AG04449 (cell line): ENCODE measurements at regions of chr4 and their contacts with region 1.

Region 1: DNA sequence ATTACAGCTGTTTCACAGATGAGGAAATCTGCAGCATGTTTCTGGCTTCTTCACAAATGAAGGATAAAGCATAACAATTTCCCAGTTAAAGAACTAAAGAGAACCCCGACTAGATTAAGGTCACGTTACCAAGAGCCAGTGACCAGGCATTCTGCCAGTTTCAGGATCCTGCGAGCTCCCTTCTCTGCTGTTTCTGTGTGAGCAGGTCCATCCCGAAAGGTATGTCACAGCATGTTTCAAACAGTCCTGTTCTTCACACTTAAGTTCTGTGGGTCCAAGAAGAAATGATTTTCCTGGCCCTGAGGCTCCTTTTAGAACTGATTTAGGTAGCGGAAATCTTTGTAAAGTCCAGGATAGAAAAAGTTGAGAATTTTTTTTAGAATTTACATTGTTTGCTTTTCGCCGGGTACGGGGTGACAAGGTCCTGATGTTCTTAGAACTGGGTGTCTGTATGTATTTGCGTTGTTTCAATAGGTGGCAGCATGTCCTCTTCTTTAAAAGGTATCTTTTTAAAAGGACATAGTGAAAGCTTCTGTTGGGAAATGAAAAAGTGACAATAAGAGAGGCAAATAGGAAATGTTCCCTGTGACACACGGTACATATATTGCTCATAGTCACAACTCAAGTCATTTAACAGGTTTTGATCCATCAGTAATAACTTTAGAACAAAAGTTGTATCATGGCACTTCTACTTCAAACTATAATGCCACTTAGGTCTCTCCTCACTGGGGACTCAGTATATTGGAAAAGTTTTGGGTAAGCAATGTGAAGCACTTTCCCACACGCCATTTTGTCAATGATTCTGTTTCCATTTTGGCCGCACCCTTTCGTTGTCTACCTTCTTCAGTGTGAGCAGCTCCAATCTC is 18.4 kb downstream of the IL21 start:
- DNase-seq: no peak
- H3K4me3 ChIP-seq: no peak overlapping the region
- CTCF ChIP-seq: peak; percentile 20

Region 2: DNA sequence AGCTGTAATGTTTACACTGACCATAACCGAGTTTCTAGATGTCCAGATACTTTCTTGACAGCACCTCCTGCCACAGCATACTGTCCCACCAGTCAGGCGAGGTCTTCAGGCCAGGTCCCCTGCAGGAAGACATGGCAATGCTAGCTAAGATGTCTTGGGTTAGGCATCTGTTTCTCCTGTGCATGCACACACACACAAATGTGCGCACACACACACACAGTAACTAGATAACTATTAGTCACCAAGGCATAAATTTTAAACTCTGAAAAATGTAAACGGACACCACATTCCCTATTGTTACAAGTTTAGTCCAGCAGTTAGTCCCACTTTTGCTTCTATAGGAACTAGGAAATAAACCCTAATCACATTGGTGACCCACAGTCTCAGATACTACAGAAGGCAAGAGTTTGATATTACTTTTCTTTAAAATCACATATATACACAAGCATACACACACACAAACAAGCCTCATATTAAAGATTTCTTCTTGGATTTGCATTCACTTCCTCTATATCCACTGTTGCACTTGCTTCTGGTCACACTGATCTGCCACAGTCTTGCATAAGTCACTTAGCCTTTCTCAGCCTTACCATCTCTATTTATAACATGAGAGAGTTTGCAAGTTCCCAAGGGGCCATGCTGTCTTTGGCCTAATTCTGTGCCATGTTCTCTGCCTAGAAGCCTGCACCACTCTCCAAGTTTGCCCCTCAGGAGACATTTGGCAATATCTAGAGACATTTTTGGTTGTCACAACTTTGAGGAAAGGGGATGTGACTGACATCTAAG is 13.9 kb before region 1 on chr4:
- CTCF ChIA-PET with region 1: interaction called, 21 read pairs
- POLR2A ChIA-PET with region 1: no interaction called
- DNase-seq: peak; percentile 16
- H3K4me3 ChIP-seq: no peak overlapping the region
- CTCF ChIP-seq: no peak

Region 3: DNA sequence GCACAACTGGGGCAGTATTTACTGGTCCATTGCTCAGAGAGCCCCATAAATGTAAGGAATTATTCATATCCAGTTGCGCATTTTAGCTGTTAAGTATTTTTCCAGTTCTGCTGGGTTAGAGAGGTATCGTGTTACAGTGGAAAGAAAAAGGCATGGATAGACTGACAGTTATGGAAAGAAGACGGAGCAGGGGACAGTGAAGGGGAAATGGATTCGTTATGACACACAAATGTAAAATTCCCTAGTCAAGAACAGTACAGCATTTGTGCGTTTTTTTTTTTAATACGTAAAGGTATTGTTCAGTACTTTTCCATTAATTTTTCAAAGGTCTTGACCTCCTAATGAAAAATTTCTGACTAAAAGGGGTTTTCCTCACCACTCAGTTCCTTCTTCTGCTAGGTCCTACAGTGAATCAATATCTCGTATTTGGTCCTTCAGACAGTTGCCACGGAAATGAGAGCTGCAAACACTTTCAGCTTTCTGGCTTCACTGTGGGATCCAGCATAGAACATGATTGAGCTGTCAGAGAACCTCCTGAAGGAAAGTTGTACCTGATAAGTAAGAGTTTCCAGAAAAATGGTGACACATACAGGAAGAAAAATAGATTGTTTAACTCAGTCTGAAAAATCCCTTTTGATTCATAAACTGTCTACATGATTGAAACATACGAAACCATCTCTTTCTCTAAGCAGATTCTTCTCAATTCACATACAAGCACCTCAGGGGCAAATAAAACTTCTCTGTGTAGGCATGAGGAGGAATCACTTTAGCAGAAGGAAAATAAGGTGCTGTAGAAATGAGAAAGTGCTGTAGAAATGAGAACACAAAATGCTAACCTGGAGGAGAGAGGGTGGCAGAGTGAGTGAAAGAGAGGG is 108.2 kb after region 1 on chr4:
- CTCF ChIA-PET with region 1: interaction called, 78 read pairs
- POLR2A ChIA-PET with region 1: no interaction called
- DNase-seq: no peak
- H3K4me3 ChIP-seq: no peak overlapping the region
- CTCF ChIP-seq: no peak

Region 4: DNA sequence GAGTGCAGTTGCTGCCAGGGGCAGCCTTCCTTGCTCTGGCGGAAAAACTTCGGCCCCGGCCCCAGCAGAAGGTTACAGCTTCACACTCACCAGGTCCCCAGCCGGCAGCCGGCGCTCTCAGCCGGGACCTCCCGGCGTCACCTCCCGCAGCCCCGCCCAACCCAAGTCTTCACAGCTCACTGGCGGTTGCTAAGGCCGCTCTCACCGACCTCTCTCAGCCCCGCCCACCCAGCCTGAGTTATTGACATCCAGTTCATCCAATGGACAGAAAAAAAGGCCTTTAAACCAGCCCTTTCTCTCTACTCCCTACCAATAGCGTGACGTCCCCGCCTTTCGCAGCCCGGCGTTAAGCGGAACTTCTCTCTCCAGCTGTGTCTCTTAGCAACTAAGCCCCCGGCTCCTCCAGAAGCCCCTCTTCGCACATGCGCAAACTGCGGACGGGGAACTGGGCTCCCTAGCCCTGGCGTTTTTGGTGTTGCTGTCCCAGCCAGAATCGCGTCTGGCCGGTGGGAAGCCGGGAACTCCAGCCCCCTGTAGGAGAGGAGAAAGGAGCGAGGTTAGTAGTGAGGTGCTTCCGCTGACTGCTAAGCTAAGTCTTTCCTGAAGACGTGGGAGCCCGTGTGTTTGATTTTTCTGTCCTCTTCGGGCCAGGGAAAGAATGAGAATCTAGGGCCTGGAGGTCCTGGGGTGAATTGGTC is 130.0 kb after region 1 on chr4 and contains the start of gene BBS12:
- CTCF ChIA-PET with region 1: interaction called, 16 read pairs
- POLR2A ChIA-PET with region 1: no interaction called
- DNase-seq: peak; percentile 95
- H3K4me3 ChIP-seq: peak within 1 kb of the TSS; percentile 82
- CTCF ChIP-seq: peak; percentile 74

Region 5: DNA sequence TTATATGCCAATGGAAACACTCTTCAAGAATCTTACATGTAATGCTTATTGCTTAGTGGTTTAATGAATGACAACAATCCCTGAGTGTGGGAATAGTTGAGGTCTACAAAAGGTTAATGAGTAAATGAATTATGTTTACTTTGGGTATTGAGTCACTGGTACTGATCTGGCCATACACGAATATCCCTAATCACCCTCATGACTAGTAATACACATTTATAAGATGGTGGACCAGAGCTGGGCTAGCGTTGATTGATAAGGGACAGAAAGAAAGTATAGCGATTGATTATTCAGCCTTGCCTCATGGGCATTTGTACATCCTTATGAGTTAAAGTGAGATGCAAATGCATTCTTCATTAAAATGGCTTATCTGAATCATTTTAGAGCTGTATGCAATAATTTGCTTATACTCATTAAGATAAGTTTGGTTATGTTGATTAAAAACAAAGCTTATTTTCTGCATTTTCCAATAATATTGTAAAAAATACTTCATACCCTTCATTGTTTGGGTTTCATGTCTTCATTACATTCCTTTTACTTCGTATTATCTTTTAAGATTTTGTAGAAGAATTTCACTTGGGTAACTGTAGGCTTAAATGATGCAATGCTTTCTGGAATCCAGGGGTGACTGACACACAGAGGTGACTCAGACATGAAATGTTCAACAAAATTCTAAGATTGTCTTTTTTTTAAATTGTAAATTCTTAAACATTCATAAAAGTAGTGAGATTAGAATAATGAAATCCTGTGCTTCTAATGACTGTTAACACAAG is 271.5 kb after region 1 on chr4:
- CTCF ChIA-PET with region 1: no interaction called
- POLR2A ChIA-PET with region 1: no interaction called
- DNase-seq: peak; percentile 51
- H3K4me3 ChIP-seq: no peak overlapping the region
- CTCF ChIP-seq: no peak

Region 6: DNA sequence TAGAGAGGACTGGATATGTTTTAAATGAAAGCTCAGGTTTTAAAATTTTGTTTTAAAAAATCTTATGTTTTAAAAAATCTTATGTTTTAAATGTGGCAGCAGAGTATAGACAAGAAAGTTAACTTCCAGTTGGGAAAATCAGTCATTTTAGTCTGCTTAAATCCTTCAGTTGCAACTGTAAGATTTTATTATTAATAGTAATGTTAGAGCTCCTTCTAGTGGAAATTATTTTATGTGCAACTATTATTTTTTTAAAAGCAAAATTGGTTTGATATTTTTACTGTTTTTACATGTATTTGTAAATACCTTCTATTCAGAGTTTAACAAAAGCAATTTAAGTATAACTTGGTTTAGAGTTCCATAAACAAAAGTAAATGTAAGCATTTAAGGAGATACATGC is 328.4 kb after region 1 on chr4:
- CTCF ChIA-PET with region 1: interaction called, 72 read pairs
- POLR2A ChIA-PET with region 1: no interaction called
- DNase-seq: no peak
- H3K4me3 ChIP-seq: no peak overlapping the region
- CTCF ChIP-seq: no peak